CD4-positive, alpha-beta memory T cell (primary cell): ENCODE measurements at regions of chr3 and their contacts with region 1.

Region 1: GRCh38 chr3:97821810-97822775 is at the start of gene CRYBG3:
- DNase-seq: peak; percentile 78 to 86 (median 85)
- H3K4me3 ChIP-seq: peak within 1 kb of the TSS; percentile 55 to 76
- H3K4me3 Mint-ChIP-seq: peak within 1 kb of the TSS; percentile 96 to 99 (median 98)
- H3K27ac ChIP-seq: peak within 1 kb of the TSS; percentile 48
- H3K27ac Mint-ChIP-seq: peak within 1 kb of the TSS; percentile 87 to 97 (median 94)
- H3K4me1 ChIP-seq: peaks cover 21% of the 10 kb centered on the region
- H3K4me1 Mint-ChIP-seq: peaks cover 24 to 38% (median 27%) of the 10 kb centered on the region in 4 donors
- H3K27me3 ChIP-seq: no peaks in the 10 kb centered on the region
- H3K27me3 Mint-ChIP-seq: peaks cover 0 to 2% of the 10 kb centered on the region in 2 donors
- total RNA-seq, gene CRYBG3: 11.6 to 12.3 TPM

Region 2: DNA sequence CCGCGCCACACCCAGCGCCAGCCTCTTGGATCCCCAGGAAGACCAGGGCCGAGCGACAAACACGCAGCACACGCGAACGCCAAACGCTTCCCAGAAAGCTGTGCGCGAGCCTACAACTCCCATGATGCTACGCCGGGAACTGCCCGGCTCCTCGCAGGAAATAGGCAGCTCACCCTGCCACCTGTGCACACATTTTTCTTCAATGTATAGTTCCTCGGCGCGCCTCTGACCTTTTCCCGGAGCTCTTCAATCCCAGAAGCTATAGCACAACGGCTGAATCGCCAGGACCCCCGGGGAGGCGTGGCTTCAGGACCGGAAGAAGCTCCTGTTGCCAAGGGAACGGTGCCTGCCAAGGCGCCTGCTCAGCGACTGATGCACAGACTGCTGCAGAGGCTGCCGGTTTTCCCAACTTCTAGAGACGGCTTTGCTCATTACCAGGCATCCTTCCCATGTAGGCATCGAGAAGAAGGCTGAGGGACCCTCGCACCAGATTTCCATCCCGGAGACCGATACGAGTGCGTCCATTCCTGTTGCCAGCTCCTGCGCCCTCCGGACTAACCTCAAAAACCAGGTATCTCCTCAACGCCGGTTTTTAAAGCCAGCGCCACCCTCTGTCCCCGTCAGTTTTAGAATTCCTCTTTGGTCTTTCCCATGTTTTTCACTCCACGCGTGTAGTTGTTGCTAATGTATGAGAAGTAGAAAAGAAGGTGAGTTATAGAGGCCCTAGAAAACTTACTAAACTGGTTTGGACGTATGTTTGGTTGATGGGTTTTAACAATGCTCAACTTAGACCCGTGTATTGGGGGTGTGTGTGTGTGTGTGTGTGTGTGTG is 57.5 kb before region 1 on chr3 and contains the start of gene ARL6:
- CTCF ChIA-PET with region 1: interaction called, 5 read pairs
- POLR2A ChIA-PET with region 1: interaction called, 16 read pairs
- intact Hi-C with region 1: loop called (anchors 1 kb)
- DNase-seq: peak; percentile 71 to 80 (median 75)
- H3K4me3 ChIP-seq: peak within 1 kb of the TSS; percentile 84
- H3K4me3 Mint-ChIP-seq: peak within 1 kb of the TSS; percentile 97 to 99 (median 98)
- H3K27ac ChIP-seq: peak within 1 kb of the TSS; percentile 73
- H3K27ac Mint-ChIP-seq: peak within 1 kb of the TSS; percentile 93 to 98 (median 95)
- H3K4me1 ChIP-seq: peaks cover 24% of the 10 kb centered on the region
- H3K4me1 Mint-ChIP-seq: peaks cover 11 to 32% (median 23%) of the 10 kb centered on the region in 4 donors
- H3K27me3 ChIP-seq: no peaks in the 10 kb centered on the region
- H3K27me3 Mint-ChIP-seq: no peaks in the 10 kb centered on the region
- total RNA-seq, gene ARL6: 3.7 to 6.4 TPM

Region 3: GRCh38 chr3:97793420-97794019 is 28.6 kb before region 1 on chr3:
- CTCF ChIA-PET with region 1: interaction called, 8 read pairs
- POLR2A ChIA-PET with region 1: no interaction called
- intact Hi-C with region 1: loop called (anchors 1 kb)
- DNase-seq: peak; percentile 41 to 66 (median 61)
- H3K4me3 ChIP-seq: no peak overlapping the region
- H3K4me3 Mint-ChIP-seq: no peak overlapping the region
- H3K27ac ChIP-seq: no peak overlapping the region
- H3K27ac Mint-ChIP-seq: no peak overlapping the region
- H3K4me1 ChIP-seq: no peaks in the 10 kb centered on the region
- H3K4me1 Mint-ChIP-seq: no peaks in the 10 kb centered on the region
- H3K27me3 ChIP-seq: no peaks in the 10 kb centered on the region
- H3K27me3 Mint-ChIP-seq: no peaks in the 10 kb centered on the region

Region 4: GRCh38 chr3:97871801-97872524 is 49.9 kb after region 1 on chr3:
- CTCF ChIA-PET with region 1: interaction called, 4 read pairs
- POLR2A ChIA-PET with region 1: interaction called, 19 read pairs
- intact Hi-C with region 1: loop called (anchors 2 kb)
- DNase-seq: peak; percentile 17 to 58 (median 30)
- H3K4me3 ChIP-seq: no peak overlapping the region
- H3K4me3 Mint-ChIP-seq: peak overlapping the region; percentile 33 to 86 (median 52)
- H3K27ac ChIP-seq: no peak overlapping the region
- H3K27ac Mint-ChIP-seq: peak overlapping the region; percentile 71 to 88 (median 81)
- H3K4me1 ChIP-seq: peaks cover 18% of the 10 kb centered on the region
- H3K4me1 Mint-ChIP-seq: peaks cover 18 to 26% (median 21%) of the 10 kb centered on the region in 4 donors
- H3K27me3 ChIP-seq: no peaks in the 10 kb centered on the region
- H3K27me3 Mint-ChIP-seq: no peaks in the 10 kb centered on the region

Region 5: GRCh38 chr3:97910931-97911351 is 88.8 kb after region 1 on chr3:
- CTCF ChIA-PET with region 1: interaction called, 8 read pairs
- POLR2A ChIA-PET with region 1: interaction called, 26 read pairs
- intact Hi-C with region 1: loop called (anchors 1 kb)
- DNase-seq: peak in 4 of 5 donors; percentile 58 to 68 (median 62)
- H3K4me3 ChIP-seq: no peak overlapping the region
- H3K4me3 Mint-ChIP-seq: peak overlapping the region; percentile 77 to 91 (median 88)
- H3K27ac ChIP-seq: peak overlapping the region; percentile 34
- H3K27ac Mint-ChIP-seq: peak overlapping the region; percentile 92 to 97 (median 96)
- H3K4me1 ChIP-seq: peaks cover 45% of the 10 kb centered on the region
- H3K4me1 Mint-ChIP-seq: peaks cover 27 to 42% (median 34%) of the 10 kb centered on the region in 4 donors
- H3K27me3 ChIP-seq: no peaks in the 10 kb centered on the region
- H3K27me3 Mint-ChIP-seq: no peaks in the 10 kb centered on the region

Region 6: GRCh38 chr3:97940034-97940433 is 117.9 kb after region 1 on chr3:
- CTCF ChIA-PET with region 1: interaction called, 12 read pairs
- POLR2A ChIA-PET with region 1: interaction called, 7 read pairs
- intact Hi-C with region 1: no loop called
- DNase-seq: peak in 4 of 5 donors; percentile 28 to 33 (median 32)
- H3K4me3 ChIP-seq: no peak overlapping the region
- H3K4me3 Mint-ChIP-seq: no peak overlapping the region
- H3K27ac ChIP-seq: no peak overlapping the region
- H3K27ac Mint-ChIP-seq: peak overlapping the region in 3 of 7 donors; percentile 38 to 65 (median 39)
- H3K4me1 ChIP-seq: no peaks in the 10 kb centered on the region
- H3K4me1 Mint-ChIP-seq: peaks cover 0 to 4% (median 2%) of the 10 kb centered on the region in 4 donors
- H3K27me3 ChIP-seq: no peaks in the 10 kb centered on the region
- H3K27me3 Mint-ChIP-seq: no peaks in the 10 kb centered on the region

Region 7: GRCh38 chr3:97971677-97972567 is 149.8 kb after region 1 on chr3 and contains the start of gene RIOX2:
- CTCF ChIA-PET with region 1: interaction called, 12 read pairs
- POLR2A ChIA-PET with region 1: interaction called, 12 read pairs
- intact Hi-C with region 1: loop called (anchors 1 kb)
- DNase-seq: peak; percentile 74 to 84 (median 80)
- H3K4me3 ChIP-seq: peak within 1 kb of the TSS in 1 of 2 donors; percentile 54
- H3K4me3 Mint-ChIP-seq: peak within 1 kb of the TSS; percentile 88 to 96 (median 94)
- H3K27ac ChIP-seq: peak within 1 kb of the TSS; percentile 41
- H3K27ac Mint-ChIP-seq: peak within 1 kb of the TSS; percentile 91 to 96 (median 95)
- H3K4me1 ChIP-seq: peaks cover 46% of the 10 kb centered on the region
- H3K4me1 Mint-ChIP-seq: peaks cover 39 to 70% (median 55%) of the 10 kb centered on the region in 4 donors
- H3K27me3 ChIP-seq: no peaks in the 10 kb centered on the region
- H3K27me3 Mint-ChIP-seq: no peaks in the 10 kb centered on the region
- total RNA-seq, gene RIOX2: 32.2 to 35.5 TPM